ENCODE measurements at regions of chr14 and their contacts with region 1.

Region 1: GRCh38 chr14:102096214-102097114 is 9.6 kb upstream of the HSP90AA1 start:
- DNase-seq: peak; percentile 80
- ATAC-seq: peak; percentile 46
- H3K4me3 Mint-ChIP-seq: no peak overlapping the region
- H3K27ac Mint-ChIP-seq: no peak overlapping the region
- H3K4me1 Mint-ChIP-seq: peaks cover 22% of the 10 kb centered on the region
- H3K27me3 Mint-ChIP-seq: no peaks in the 10 kb centered on the region
- CTCF ChIP-seq: peak; percentile 97

Region 2: DNA sequence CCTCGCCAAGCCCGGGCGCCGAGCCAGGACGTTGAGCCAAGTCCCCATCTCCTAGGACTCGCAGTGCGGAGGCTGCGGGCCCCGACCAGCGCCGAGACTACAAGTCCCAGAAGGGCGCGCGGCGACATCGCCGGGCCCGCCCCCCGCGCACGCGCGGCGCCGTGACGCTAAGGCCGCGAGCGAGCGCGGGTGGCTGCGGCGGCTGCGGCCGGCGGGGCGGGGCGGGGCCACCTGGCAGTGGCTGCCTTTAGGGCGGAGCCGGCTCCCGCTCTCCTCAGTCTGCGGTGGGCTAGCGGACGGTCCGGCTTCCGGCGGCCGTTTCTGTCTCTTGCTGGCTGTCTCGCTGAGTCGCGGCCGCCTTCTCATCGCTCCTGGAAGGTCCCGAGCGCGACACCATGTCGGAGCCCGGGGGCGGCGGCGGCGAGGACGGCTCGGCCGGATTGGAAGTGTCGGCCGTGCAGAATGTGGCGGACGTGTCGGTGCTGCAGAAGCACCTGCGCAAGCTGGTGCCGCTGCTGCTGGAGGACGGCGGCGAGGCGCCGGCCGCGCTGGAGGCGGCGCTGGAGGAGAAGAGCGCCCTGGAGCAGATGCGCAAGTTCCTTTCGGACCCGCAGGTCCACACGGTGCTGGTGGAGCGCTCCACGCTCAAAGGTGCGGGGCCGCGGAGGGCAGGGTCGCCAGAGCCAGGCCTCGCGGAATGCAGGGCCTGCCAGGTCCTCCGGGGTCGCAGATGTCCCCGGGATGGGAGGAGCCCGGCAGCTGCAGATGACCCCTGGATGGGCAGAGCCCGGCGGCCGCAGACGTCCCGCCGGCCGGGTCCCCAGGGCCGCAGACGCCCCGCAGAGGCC is 131.9 kb before region 1 on chr14 and contains the start of gene DYNC1H1:
- CTCF ChIA-PET with region 1: interaction called, 14 read pairs
- POLR2A ChIA-PET with region 1: interaction called, 4 read pairs
- intact Hi-C with region 1: loop called (anchors 5 kb)
- DNase-seq: peak; percentile 89
- ATAC-seq: peak; percentile 81
- H3K4me3 Mint-ChIP-seq: peak within 1 kb of the TSS; percentile 89
- H3K27ac Mint-ChIP-seq: peak within 1 kb of the TSS; percentile 93
- H3K4me1 Mint-ChIP-seq: peaks cover 32% of the 10 kb centered on the region
- H3K27me3 Mint-ChIP-seq: no peaks in the 10 kb centered on the region
- CTCF ChIP-seq: no peak
- total RNA-seq, gene DYNC1H1: 291 to 301 TPM

Region 3: DNA sequence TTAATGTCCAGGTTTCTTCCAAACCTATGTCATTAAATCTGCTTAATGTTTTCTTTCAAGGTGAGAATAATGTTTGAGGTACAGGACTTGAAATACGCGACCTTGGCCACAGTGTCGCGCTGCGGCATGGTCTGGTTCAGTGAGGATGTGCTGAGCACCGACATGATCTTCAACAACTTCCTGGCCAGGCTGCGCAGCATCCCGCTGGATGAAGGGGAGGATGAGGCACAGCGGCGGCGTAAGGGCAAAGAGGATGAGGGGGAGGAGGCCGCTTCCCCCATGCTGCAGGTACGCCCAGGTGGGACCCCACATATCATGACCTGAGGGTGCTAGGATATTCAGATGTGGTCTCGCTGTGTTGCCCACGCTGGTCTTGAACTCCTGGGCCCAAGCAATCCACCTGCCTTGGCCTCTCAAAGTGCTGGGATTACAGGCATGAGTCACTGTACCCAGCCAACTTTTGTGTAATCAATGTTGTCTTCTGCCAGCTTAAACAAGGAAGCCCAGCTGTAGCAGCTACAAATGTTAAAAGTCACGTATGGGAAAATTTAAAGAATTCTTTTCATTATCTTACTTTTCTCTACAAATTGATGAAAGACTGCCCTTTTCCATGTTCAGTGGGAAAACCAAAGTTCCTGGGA is 81.3 kb before region 1 on chr14:
- CTCF ChIA-PET with region 1: interaction called, 10 read pairs
- POLR2A ChIA-PET with region 1: no interaction called
- intact Hi-C with region 1: no loop called
- DNase-seq: no peak
- ATAC-seq: no peak
- H3K4me3 Mint-ChIP-seq: no peak overlapping the region
- H3K27ac Mint-ChIP-seq: no peak overlapping the region
- H3K4me1 Mint-ChIP-seq: peaks cover 11% of the 10 kb centered on the region
- H3K27me3 Mint-ChIP-seq: no peaks in the 10 kb centered on the region
- CTCF ChIP-seq: no peak

Region 4: GRCh38 chr14:102063091-102063802 is 33.2 kb before region 1 on chr14:
- CTCF ChIA-PET with region 1: interaction called, 38 read pairs
- POLR2A ChIA-PET with region 1: no interaction called
- intact Hi-C with region 1: loop called (anchors 5 kb)
- DNase-seq: peak; percentile 81
- ATAC-seq: peak; percentile 90
- H3K4me3 Mint-ChIP-seq: no peak overlapping the region
- H3K27ac Mint-ChIP-seq: no peak overlapping the region
- H3K4me1 Mint-ChIP-seq: peaks cover 7% of the 10 kb centered on the region
- H3K27me3 Mint-ChIP-seq: no peaks in the 10 kb centered on the region
- CTCF ChIP-seq: peak; percentile 24

Region 5: GRCh38 chr14:102111101-102111500 is 14.6 kb after region 1 on chr14:
- CTCF ChIA-PET with region 1: interaction called, 19 read pairs
- POLR2A ChIA-PET with region 1: no interaction called
- intact Hi-C with region 1: no loop called
- DNase-seq: no peak
- ATAC-seq: no peak
- H3K4me3 Mint-ChIP-seq: no peak overlapping the region
- H3K27ac Mint-ChIP-seq: no peak overlapping the region
- H3K4me1 Mint-ChIP-seq: no peaks in the 10 kb centered on the region
- H3K27me3 Mint-ChIP-seq: no peaks in the 10 kb centered on the region
- CTCF ChIP-seq: no peak

Measured in activated CD8-positive, alpha-beta T cell treated with anti-CD3 and anti-CD28 coated beads for 36 hours (primary cell).